Stomach (tissue), 19 donors: ENCODE measurements at regions of chr3 and their contacts with region 1.

Region 1: DNA sequence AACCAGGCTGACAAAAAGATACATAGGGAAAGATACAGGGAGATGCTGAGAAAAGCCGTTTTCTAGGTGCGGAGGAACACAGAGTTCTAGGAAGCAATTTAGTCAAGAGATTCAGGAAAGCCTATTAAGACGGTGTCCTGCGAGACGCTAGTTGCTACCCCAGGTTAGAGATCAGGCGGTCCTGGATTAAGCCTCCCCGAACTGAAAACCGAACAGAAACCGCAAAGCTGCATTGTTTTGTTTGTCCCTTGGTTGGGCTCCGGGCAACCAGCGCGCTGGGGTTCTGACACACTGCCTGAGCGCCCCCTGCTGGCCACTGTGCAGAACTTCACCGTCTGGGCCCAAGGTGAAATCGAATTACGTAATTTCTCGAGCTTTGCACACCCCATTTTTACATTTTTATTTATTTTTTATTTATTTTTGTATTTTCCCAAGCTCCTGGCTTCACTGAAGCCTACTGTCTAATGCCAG is 37.3 kb upstream of the NDUFB4 start:
- DNase-seq: peak; percentile 89 to 97
- H3K4me3 ChIP-seq: peak overlapping the region; percentile 40 to 51 (median 44)
- H3K27ac ChIP-seq: peak overlapping the region; percentile 41 to 84 (median 74)
- H3K4me1 ChIP-seq: peaks cover 14 to 43% (median 33%) of the 10 kb centered on the region in 4 donors
- H3K27me3 ChIP-seq: no peaks in the 10 kb centered on the region
- CTCF ChIP-seq: peak in 6 of 7 experiments; percentile 94 to 99 (median 98)
- EP300 ChIP-seq: no peak
- POLR2A ChIP-seq: no peak

Region 2: DNA sequence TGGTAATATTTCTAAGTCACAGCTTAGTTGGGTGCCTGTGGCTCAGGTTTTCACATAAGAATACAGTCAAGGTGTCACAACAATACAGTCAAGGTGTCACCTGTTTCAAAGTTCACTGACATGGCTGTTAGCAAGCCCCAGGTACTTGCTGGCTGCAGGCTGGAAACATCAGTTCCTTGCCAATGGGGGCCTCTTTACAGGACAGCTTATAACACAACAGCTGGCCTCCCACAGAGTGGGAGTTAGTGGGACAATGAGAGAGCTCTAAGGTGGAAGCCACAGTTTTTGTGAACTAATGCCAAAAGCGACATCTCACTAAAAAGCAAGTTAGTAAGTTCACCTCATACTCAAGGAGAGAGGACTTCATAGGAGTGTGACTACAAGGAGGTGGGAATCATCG is 319.2 kb before region 1 on chr3:
- intact Hi-C with region 1: loop called (anchors 5 kb)
- DNase-seq: no peak
- H3K4me3 ChIP-seq: no peak overlapping the region
- H3K27ac ChIP-seq: no peak overlapping the region
- H3K4me1 ChIP-seq: no peaks in the 10 kb centered on the region
- H3K27me3 ChIP-seq: peaks cover 0 to 4% (median 0%) of the 10 kb centered on the region in 3 donors
- CTCF ChIP-seq: no peak
- EP300 ChIP-seq: no peak
- POLR2A ChIP-seq: no peak

Region 3: DNA sequence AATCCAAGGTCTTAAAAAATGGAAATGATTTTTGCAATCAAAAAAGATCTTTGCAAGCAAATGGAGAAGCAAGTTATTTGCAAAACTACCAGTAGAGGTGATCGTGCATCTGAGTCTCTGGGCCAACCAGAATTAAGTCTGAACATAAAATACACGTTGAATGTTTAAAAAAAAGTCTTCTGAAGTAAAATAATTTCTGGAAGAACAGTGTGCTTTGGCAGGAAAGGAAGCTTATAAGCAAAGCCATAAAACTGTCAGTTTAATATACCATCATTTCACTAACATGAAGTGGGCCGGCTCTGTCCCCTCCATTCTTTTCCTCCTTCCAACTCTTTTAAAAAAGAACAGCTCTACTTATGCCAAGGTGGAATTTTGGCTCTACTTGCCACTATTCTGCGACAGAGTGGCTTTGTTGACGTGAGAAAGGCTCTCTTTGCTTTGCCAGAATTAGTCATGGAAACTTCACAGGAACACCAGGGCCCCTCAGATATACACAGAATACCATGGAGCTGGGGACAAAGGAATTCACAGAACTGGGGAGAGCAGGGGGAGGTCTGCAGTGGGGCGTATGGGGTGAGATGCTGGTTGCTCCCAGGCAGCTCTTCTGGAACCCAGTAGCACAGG is 137.8 kb before region 1 on chr3:
- intact Hi-C with region 1: loop called (anchors 10 kb)
- DNase-seq: peak in 1 of 2 donors; percentile 85
- H3K4me3 ChIP-seq: no peak overlapping the region
- H3K27ac ChIP-seq: peak overlapping the region in 4 of 5 donors; percentile 60 to 83 (median 64)
- H3K4me1 ChIP-seq: peaks cover 18 to 87% (median 50%) of the 10 kb centered on the region in 4 donors
- H3K27me3 ChIP-seq: no peaks in the 10 kb centered on the region
- CTCF ChIP-seq: peak in 1 of 7 experiments; percentile 7
- EP300 ChIP-seq: peak; percentile 89
- POLR2A ChIP-seq: no peak

Region 4: GRCh38 chr3:120795017-120795648 is 236.3 kb after region 1 on chr3:
- intact Hi-C with region 1: loop called (anchors 5 kb)
- DNase-seq: peak; percentile 74 to 82
- H3K4me3 ChIP-seq: no peak overlapping the region
- H3K27ac ChIP-seq: no peak overlapping the region
- H3K4me1 ChIP-seq: peaks cover 0 to 8% (median 0%) of the 10 kb centered on the region in 4 donors
- H3K27me3 ChIP-seq: no peaks in the 10 kb centered on the region
- CTCF ChIP-seq: peak in 5 of 7 experiments; percentile 44 to 68 (median 56)
- EP300 ChIP-seq: no peak
- POLR2A ChIP-seq: no peak